GM12878 (cell line): ENCODE measurements at regions of chr18 and their contacts with region 1.

Region 1: DNA sequence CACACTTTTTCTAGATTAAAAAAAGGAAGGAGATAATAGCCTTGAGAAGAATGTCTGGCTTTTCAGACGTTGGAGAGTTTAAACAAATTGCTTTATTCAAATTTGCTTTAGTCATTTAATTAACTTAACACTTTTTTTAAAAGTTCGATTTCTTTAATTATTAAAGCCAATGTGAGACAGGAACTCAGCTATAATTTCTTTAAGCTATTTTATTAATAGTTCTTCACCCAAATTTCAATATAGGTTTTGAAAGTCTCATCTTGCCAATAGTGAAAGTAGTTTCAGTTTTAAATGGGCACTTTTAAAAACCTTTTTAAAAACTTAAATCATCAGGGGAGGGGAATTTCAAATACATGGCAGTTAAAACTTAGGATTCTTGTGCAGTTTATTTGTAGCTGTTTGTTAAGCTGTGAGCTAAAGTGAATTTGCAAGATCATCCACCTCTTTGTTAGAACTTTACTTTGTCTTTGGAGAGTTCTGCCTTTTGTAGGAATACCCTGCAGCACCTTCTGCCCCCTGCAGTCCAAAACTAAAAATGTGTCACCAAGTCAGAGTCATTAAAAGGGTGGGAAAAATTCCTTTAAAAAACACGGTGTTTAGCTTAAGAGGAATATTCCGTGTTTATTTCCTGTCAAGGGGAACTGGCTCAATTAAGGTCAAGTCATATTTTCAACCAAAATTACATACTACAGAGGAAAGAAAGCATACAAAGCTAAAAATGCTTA is 4.6 kb downstream of the TGIF1 start:
- DNase-seq: peak; percentile 19
- ATAC-seq: no peak; the same call in 2 of the 3 replicates
- H3K4me3 ChIP-seq: peak overlapping the region; percentile 28; the same call in 1 of the 2 replicates
- H3K27ac ChIP-seq: peak overlapping the region; percentile 19; the same call in 1 of the 2 replicates
- H3K4me1 ChIP-seq: peaks cover 22% of the 10 kb centered on the region
- H3K27me3 ChIP-seq: peaks cover 2 to 16% of the 10 kb centered on the region in 2 experiments
- CTCF ChIP-seq: peak; percentile 59 to 68 (median 59)
- EP300 ChIP-seq: no peak
- POLR2A ChIP-seq: no peak
- RAD21 ChIP-seq: peak; percentile 69

Region 2: DNA sequence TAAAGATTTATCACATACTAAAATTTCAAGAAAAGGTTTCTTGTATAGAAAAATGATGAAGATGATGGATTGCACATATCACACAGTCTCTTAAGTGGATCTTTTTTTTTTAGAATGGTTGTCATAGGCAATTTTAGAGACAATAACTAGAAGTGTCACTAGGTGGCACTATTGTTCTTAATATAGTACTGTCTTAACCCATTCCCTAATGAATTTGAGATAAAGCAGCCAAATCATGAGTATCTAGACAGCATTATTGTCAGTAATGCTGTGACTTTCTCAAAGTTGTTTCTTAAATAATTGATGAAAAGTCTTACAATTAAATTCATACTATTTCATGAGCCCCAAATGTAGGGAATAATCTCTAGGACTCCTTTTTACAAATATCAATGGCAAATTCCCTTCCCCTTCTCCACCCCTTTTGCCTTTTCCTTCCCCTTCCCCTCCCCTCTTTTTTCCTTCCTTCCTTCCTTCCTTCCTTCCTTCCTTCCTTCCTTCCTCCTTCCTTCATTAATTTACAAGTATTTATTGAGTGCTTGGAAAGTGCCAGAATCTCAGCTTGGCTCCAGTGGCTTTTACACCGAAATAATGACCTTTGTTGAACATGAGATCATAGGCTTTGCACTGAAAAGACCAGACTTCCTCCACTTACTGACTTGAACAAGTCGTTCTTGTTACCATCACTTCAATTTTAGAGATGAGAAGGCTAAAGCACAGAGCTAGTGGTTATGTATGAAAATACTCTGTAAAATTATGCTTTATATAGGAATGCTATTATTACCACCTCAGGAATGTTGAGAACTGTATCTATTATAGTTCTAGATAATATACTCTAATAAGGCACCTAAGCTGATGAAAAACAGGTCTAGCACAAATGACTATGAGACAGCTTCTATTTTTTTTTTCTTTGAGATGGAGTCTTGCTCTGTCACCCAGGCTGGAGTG is 172.8 kb before region 1 on chr18:
- CTCF ChIA-PET with region 1: interaction called, 36 read pairs
- POLR2A ChIA-PET with region 1: interaction called, 4 read pairs
- RAD21 ChIA-PET with region 1: interaction called, 49 read pairs
- SMC1A ChIA-PET with region 1: interaction called, 15 read pairs
- in situ Hi-C with region 1: loop called (anchors 5 kb)
- intact Hi-C with region 1: loop called (anchors 1 kb)
- DNase-seq: no peak
- ATAC-seq: peak; percentile 69
- H3K4me3 ChIP-seq: no peak overlapping the region
- H3K27ac ChIP-seq: no peak overlapping the region
- H3K4me1 ChIP-seq: peaks cover 24% of the 10 kb centered on the region
- H3K27me3 ChIP-seq: no peaks in the 10 kb centered on the region
- CTCF ChIP-seq: peak; percentile 35 to 66 (median 46); a peak in 4 of 6 replicates
- EP300 ChIP-seq: no peak
- POLR2A ChIP-seq: no peak
- RAD21 ChIP-seq: peak; percentile 75

Region 3: GRCh38 chr18:3340015-3340681 is 114.4 kb before region 1 on chr18:
- CTCF ChIA-PET with region 1: no interaction called
- POLR2A ChIA-PET with region 1: no interaction called
- RAD21 ChIA-PET with region 1: no interaction called
- SMC1A ChIA-PET with region 1: no interaction called
- in situ Hi-C with region 1: no loop called
- intact Hi-C with region 1: no loop called
- DNase-seq: no peak
- ATAC-seq: no peak
- H3K4me3 ChIP-seq: no peak overlapping the region
- H3K27ac ChIP-seq: no peak overlapping the region
- H3K4me1 ChIP-seq: no peaks in the 10 kb centered on the region
- H3K27me3 ChIP-seq: no peaks in the 10 kb centered on the region; a peak in 2 of 4 replicates
- CTCF ChIP-seq: no peak
- EP300 ChIP-seq: no peak
- POLR2A ChIP-seq: no peak
- RAD21 ChIP-seq: no peak

Region 4: DNA sequence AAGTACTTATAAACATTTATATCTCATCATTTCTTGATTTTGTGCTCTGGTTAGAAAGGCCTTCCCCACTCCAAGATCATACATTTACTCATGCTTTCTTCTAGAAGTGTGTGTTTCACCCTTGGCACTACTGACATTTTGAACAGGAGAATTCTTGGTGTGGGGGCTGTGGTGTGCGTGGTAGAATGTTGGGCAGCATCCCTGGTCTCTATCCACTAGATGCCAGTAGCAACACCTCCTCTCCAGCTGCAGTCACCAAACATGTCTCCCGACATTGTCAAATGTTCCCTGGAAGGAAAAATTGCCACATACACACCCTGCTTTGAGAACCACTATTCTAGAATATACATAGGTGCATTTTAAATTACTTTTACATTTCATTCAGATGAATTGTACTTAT is 13.2 kb before region 1 on chr18:
- CTCF ChIA-PET with region 1: interaction called, 11 read pairs
- POLR2A ChIA-PET with region 1: no interaction called
- RAD21 ChIA-PET with region 1: interaction called, 18 read pairs
- SMC1A ChIA-PET with region 1: interaction called, 10 read pairs
- in situ Hi-C with region 1: no loop called
- intact Hi-C with region 1: no loop called
- DNase-seq: no peak
- ATAC-seq: no peak
- H3K4me3 ChIP-seq: no peak overlapping the region
- H3K27ac ChIP-seq: no peak overlapping the region
- H3K4me1 ChIP-seq: no peaks in the 10 kb centered on the region
- H3K27me3 ChIP-seq: no peaks in the 10 kb centered on the region
- CTCF ChIP-seq: peak in 1 of 3 experiments; percentile 31; a peak in 1 of 6 replicates
- EP300 ChIP-seq: no peak
- POLR2A ChIP-seq: no peak
- RAD21 ChIP-seq: no peak; the same call in 1 of the 2 replicates

Region 5: GRCh38 chr18:3493501-3494244 is 39.1 kb after region 1 on chr18:
- CTCF ChIA-PET with region 1: interaction called, 6 read pairs
- POLR2A ChIA-PET with region 1: no interaction called
- RAD21 ChIA-PET with region 1: interaction called, 5 read pairs
- SMC1A ChIA-PET with region 1: interaction called, 25 read pairs
- in situ Hi-C with region 1: no loop called
- intact Hi-C with region 1: no loop called
- DNase-seq: no peak
- ATAC-seq: peak; percentile 22
- H3K4me3 ChIP-seq: peak overlapping the region; percentile 20; the same call in 1 of the 2 replicates
- H3K27ac ChIP-seq: no peak overlapping the region
- H3K4me1 ChIP-seq: no peaks in the 10 kb centered on the region
- H3K27me3 ChIP-seq: peaks cover 0 to 4% of the 10 kb centered on the region in 2 experiments; a peak in 2 of 4 replicates
- CTCF ChIP-seq: no peak
- EP300 ChIP-seq: no peak
- POLR2A ChIP-seq: no peak
- RAD21 ChIP-seq: no peak

Region 6: GRCh38 chr18:3585656-3586509 is 131.4 kb after region 1 on chr18:
- CTCF ChIA-PET with region 1: interaction called, 79 read pairs
- POLR2A ChIA-PET with region 1: interaction called, 7 read pairs
- RAD21 ChIA-PET with region 1: interaction called, 36 read pairs
- SMC1A ChIA-PET with region 1: interaction called, 49 read pairs
- in situ Hi-C with region 1: no loop called
- intact Hi-C with region 1: loop called (anchors 2 kb)
- DNase-seq: no peak
- ATAC-seq: peak; percentile 84
- H3K4me3 ChIP-seq: peak overlapping the region; percentile 28; the same call in 1 of the 2 replicates
- H3K27ac ChIP-seq: peak overlapping the region; percentile 75
- H3K4me1 ChIP-seq: peaks cover 30% of the 10 kb centered on the region
- H3K27me3 ChIP-seq: no peaks in the 10 kb centered on the region
- CTCF ChIP-seq: peak; percentile 70 to 76 (median 72)
- EP300 ChIP-seq: no peak; a peak in 1 of 4 replicates
- POLR2A ChIP-seq: no peak
- RAD21 ChIP-seq: peak; percentile 76